ENCODE measurements at regions of chr19 and their contacts with region 1.

Region 1: DNA sequence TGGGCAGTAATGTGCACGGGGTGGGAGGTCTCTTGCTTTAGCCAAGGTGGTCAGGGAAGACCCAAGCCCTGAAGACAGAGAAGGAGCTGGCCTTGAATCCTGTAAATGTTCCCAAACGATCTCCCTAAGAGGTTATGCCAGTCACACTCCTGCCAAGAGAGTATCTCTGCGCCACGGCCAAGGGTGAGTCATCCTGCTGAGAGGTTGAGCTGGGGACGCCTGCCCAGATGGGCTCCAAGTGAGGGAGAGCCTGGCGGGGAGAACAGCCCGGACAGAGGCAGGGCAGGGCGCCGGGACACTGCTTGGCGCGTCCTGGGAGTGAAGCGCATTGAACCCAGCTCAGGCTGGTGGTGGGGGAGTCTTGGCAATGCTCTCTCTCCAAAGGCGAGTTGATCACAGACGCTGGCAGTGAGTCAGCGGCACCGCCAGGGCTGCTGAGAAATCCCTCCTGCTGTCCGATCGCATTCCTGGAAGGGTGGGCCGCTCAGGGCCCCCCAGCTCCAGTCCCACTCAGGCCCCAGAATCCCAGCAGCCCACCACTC is 16.4 kb downstream of the SULT2B1 start:
- DNase-seq: peak; percentile 85
- H3K4me3 ChIP-seq: peak overlapping the region in 2 of 3 experiments; percentile 17 to 31
- H3K27ac ChIP-seq: peak overlapping the region; percentile 40
- H3K4me1 ChIP-seq: peaks cover 10% of the 10 kb centered on the region
- H3K27me3 ChIP-seq: no peaks in the 10 kb centered on the region
- CTCF ChIP-seq: no peak

Region 2: GRCh38 chr19:48023011-48023410 is 545.4 kb before region 1 on chr19:
- CTCF ChIA-PET with region 1: interaction called, 30 read pairs
- dilution Hi-C with region 1: no loop called
- in situ Hi-C with region 1: no loop called
- intact Hi-C with region 1: no loop called
- DNase-seq: no peak
- H3K4me3 ChIP-seq: no peak overlapping the region
- H3K27ac ChIP-seq: no peak overlapping the region
- H3K4me1 ChIP-seq: no peaks in the 10 kb centered on the region
- H3K27me3 ChIP-seq: no peaks in the 10 kb centered on the region
- CTCF ChIP-seq: no peak

Region 3: GRCh38 chr19:48608798-48609263 is 40.4 kb after region 1 on chr19:
- CTCF ChIA-PET with region 1: no interaction called
- dilution Hi-C with region 1: no loop called
- in situ Hi-C with region 1: no loop called
- intact Hi-C with region 1: no loop called
- DNase-seq: no peak
- H3K4me3 ChIP-seq: no peak overlapping the region
- H3K27ac ChIP-seq: no peak overlapping the region
- H3K4me1 ChIP-seq: peaks cover 3% of the 10 kb centered on the region
- H3K27me3 ChIP-seq: no peaks in the 10 kb centered on the region
- CTCF ChIP-seq: peak; percentile 50 to 59